ENCODE measurements at regions of chr2 and their contacts with region 1.

Region 1: GRCh38 chr2:128321784-128322714 is 3.4 kb upstream of the HS6ST1 start:
- DNase-seq: peak; percentile 85 to 87
- ATAC-seq: peak; percentile 55 to 76 (median 69)
- H3K4me3 ChIP-seq: peak overlapping the region; percentile 25 to 66 (median 59)
- H3K27ac ChIP-seq: peak overlapping the region in 9 of 10 donors; percentile 52 to 90 (median 79)
- H3K4me1 ChIP-seq: peaks cover 1 to 44% (median 28%) of the 10 kb centered on the region in 9 donors
- H3K27me3 ChIP-seq: peaks cover 0 to 8% (median 0%) of the 10 kb centered on the region in 7 donors
- CTCF ChIP-seq: peak; percentile 94 to 99 (median 99)

Region 2: DNA sequence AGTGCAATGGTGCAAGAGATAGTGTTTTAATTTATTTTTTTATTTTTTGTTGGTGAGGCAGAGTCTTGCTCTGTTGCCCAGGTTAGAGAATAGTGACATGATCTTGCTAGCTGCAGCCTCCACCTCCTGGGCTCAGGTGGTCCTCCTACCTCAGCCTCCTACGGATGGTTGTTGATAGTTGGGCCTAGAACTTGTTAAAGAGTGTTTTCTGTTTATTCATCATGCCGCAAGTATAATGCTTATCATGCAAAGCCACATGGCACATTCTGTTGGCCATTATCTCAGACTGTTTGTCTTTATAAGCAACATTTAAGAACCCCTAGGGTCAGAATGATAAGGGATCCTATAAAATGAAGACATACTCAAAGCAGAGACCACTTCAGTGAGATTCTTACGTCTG is 229.4 kb before region 1 on chr2:
- intact Hi-C with region 1: no loop called
- DNase-seq: no peak
- ATAC-seq: no peak
- H3K4me3 ChIP-seq: peak overlapping the region in 1 of 10 donors; percentile 95
- H3K27ac ChIP-seq: no peak overlapping the region
- H3K4me1 ChIP-seq: peaks cover 0 to 39% (median 25%) of the 10 kb centered on the region in 9 donors
- H3K27me3 ChIP-seq: no peaks in the 10 kb centered on the region
- CTCF ChIP-seq: no peak

Region 3: GRCh38 chr2:128178650-128179460 is 143.2 kb before region 1 on chr2:
- intact Hi-C with region 1: loop called in 3 of 10 experiments (anchors 10 kb)
- DNase-seq: peak; percentile 32 to 70
- ATAC-seq: peak; percentile 76 to 98 (median 94)
- H3K4me3 ChIP-seq: no peak overlapping the region
- H3K27ac ChIP-seq: peak overlapping the region; percentile 52 to 84 (median 68)
- H3K4me1 ChIP-seq: peaks cover 0 to 23% (median 11%) of the 10 kb centered on the region in 9 donors
- H3K27me3 ChIP-seq: no peaks in the 10 kb centered on the region
- CTCF ChIP-seq: peak; percentile 25 to 80 (median 72)

Region 4: GRCh38 chr2:128442053-128442751 is 120.2 kb after region 1 on chr2:
- intact Hi-C with region 1: loop called in 2 of 10 experiments (anchors 10 kb)
- DNase-seq: no peak
- ATAC-seq: no peak
- H3K4me3 ChIP-seq: no peak overlapping the region
- H3K27ac ChIP-seq: peak overlapping the region in 6 of 10 donors; percentile 37 to 72 (median 50)
- H3K4me1 ChIP-seq: peaks cover 0 to 51% (median 32%) of the 10 kb centered on the region in 9 donors
- H3K27me3 ChIP-seq: no peaks in the 10 kb centered on the region
- CTCF ChIP-seq: no peak

Region 5: DNA sequence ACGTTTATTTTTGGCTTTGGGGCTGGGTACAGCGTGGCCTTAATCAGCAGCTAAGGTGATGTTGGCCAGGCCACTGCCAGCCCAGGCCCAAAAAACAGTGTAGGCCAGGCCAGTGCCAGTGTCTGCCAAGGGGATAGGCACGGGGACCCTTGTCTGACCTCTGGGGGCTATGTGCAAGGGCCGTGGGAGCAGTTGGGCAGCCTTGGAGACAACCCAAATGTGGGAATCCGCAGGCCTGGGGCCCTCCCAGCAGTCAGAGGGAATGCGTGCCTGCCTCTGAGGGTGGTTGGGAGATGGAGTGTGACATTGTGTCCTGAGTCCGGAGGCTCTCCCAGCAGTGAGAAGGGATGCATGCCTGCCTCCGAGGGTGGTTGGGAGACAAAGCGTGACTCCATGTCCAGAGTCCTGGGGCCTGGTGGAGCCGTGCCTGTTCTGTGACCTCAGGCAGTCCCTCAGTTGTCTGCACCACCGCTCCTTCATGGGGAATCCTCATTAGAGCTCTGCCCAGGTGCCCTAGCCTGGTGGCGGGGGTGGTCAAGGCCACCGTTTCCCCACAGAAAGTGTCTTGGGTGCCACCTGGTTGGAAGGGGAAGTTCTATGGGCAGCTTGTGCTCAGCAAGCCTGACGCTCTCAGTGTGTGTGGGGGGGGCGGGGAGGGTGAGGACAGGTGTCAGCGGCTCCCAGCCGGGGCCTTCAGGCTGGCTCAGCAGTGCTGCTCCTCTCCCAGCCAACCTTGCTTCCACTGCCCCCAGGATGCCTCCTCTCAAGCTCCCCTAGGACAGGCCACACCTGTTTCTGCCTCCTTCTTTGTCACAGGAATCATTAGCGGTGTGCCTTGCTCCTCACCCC is 182.0 kb after region 1 on chr2:
- intact Hi-C with region 1: loop called in 1 of 10 experiments (anchors 10 kb)
- DNase-seq: no peak
- ATAC-seq: peak in 7 of 8 donors; percentile 36 to 87 (median 66)
- H3K4me3 ChIP-seq: no peak overlapping the region
- H3K27ac ChIP-seq: peak overlapping the region in 6 of 10 donors; percentile 31 to 52 (median 39)
- H3K4me1 ChIP-seq: peaks cover 0 to 49% (median 20%) of the 10 kb centered on the region in 9 donors
- H3K27me3 ChIP-seq: no peaks in the 10 kb centered on the region
- CTCF ChIP-seq: no peak

Region 6: GRCh38 chr2:128536925-128537620 is 215.0 kb after region 1 on chr2:
- intact Hi-C with region 1: loop called in 4 of 10 experiments (anchors 10 kb)
- DNase-seq: no peak
- ATAC-seq: no peak
- H3K4me3 ChIP-seq: no peak overlapping the region
- H3K27ac ChIP-seq: no peak overlapping the region
- H3K4me1 ChIP-seq: peaks cover 0 to 3% (median 0%) of the 10 kb centered on the region in 9 donors
- H3K27me3 ChIP-seq: no peaks in the 10 kb centered on the region
- CTCF ChIP-seq: no peak

Region 7: DNA sequence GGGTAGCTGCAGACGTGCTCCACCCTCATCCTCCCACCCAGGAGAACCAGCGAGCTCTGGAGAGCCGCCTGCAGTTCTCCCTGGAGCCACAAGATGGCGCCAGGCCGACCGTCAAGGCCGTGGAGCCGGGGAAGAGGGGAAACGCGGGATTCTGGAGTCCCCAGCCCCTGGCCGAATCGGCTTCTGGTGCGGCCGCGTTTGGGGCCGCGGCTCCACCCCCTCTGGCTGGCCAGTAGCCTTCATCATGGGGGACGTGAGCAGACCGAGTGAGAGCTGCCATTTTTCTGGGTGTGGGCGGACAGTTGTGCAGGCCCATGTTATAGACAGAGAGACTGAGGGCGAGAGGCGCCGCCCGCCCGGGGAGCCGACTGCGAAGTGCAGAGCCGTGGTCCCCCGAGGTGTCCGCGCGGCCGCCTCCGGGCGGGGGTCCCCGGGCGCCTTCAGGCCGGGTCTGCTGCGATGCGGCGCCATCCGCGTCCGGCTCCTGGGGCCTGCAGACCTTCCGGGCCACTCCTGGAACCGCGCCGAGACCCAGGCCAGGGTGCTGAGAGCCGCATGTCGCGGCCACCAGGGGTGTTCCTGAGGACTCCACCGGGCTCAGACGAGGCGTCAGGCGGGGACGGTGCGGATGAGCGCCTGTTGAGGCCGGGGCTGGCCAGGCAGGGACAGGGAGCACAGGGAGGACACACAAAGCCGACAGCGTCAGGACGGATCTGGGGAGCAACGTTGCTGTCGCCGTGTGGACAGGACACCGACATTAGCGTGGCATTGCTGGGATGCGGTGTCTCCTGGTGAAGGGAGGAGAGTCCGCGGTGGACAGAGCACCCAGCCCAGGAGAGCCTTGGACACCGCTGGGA is 414.9 kb after region 1 on chr2:
- intact Hi-C with region 1: loop called in 6 of 10 experiments (anchors 5 to 10 kb)
- DNase-seq: peak; percentile 79 to 83
- ATAC-seq: peak; percentile 59 to 86 (median 81)
- H3K4me3 ChIP-seq: peak overlapping the region; percentile 4 to 52 (median 39)
- H3K27ac ChIP-seq: no peak overlapping the region
- H3K4me1 ChIP-seq: peaks cover 0 to 55% (median 18%) of the 10 kb centered on the region in 9 donors
- H3K27me3 ChIP-seq: peaks cover 0 to 15% (median 0%) of the 10 kb centered on the region in 7 donors
- CTCF ChIP-seq: peak; percentile 98 to 100 (median 99)

Region 8: DNA sequence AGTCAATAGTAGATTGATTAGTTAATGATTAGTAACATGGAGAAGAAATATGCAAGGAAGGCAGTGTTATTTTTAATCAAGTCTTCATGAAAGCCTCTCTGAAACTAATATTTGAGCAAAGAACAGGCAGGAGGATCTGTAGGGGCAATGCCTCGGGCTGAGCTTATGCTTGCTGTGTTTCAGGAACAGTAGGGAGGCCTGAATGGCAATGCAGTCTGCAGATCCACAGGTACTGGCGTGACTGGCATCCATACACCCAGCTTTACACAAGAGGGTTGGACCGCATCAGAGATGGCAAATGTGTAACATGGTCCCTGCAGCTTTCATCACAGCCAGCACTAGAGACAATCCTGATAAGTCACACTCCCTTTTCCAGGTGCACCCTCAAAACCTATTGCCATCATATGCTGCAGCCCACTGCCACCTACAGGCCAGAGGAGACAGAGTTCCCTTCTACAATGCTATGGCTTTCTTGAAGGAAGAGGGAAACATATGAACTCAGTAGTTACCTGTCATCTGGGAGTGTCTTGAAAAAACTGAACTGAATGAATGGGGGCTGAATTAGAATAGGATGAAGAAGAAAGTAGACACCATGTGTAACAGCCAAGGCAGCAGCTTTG is 1075.0 kb after region 1 on chr2:
- intact Hi-C with region 1: loop called in 1 of 10 experiments (anchors 5 kb)
- DNase-seq: peak in 1 of 2 donors; percentile 16
- ATAC-seq: peak in 2 of 8 donors; percentile 59 to 69
- H3K4me3 ChIP-seq: no peak overlapping the region
- H3K27ac ChIP-seq: no peak overlapping the region
- H3K4me1 ChIP-seq: peaks cover 0 to 6% (median 0%) of the 10 kb centered on the region in 9 donors
- H3K27me3 ChIP-seq: no peaks in the 10 kb centered on the region
- CTCF ChIP-seq: peak; percentile 33 to 67 (median 57)

Measured in heart right ventricle (tissue), 16 donors.